ENCODE measurements at regions of chr7 and their contacts with region 1.

Region 1: DNA sequence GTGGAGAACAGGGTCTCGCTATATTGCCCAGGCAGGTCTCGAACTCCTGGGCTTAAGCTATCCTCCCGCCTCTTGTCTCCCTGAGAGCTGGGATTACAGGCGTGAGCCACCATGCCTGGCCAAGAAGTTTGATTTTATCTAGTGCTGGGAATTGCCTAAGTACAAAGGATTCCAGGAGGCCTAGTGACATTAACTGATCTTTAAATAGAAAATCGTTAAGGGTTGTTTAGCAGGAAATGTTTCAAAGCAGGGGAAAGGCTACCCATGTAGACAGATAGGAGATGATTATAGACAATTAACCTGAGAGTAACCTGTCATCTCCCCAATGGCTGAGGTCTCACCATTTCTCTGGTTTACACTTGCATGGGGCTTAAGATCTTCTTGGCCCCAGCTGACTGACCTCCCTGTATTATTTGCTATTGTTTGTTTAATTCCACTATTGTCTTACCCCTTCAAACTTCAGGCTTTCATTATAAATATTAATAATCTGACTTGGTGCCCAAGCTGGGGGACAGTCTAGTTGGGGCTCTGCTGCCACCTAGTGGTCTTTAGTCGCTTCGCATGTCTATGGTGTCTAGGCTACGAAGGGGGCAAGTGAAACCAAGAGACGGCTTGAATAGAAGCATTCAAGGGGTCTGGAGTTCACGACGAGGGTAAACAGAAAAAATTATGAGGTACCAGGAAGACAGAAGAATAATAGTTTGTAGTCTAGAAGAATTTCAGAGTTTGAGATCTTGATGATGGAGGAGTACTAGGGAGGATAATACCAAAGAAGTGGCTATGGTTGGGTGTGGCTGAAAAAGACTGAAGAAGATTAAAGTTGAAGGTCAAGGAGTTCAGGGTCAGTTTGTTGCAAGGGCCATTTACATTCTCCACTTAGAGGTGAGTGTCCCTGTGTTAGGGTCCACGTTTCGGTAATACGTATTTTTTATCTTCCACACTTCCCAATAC is 40.4 kb upstream of the BPGM start:
- DNase-seq: peak; percentile 20 to 64 (median 50)
- ATAC-seq: peak; percentile 92
- H3K4me3 ChIP-seq: no peak overlapping the region
- H3K4me3 Mint-ChIP-seq: peak overlapping the region in 9 of 10 donors; percentile 6 to 85 (median 61)
- H3K27ac ChIP-seq: no peak overlapping the region
- H3K27ac Mint-ChIP-seq: peak overlapping the region in 1 of 9 donors; percentile 80
- H3K4me1 ChIP-seq: no peaks in the 10 kb centered on the region
- H3K4me1 Mint-ChIP-seq: peaks cover 4 to 6% (median 5%) of the 10 kb centered on the region in 7 donors
- H3K27me3 ChIP-seq: no peaks in the 10 kb centered on the region
- H3K27me3 Mint-ChIP-seq: peaks cover 4 to 48% (median 22%) of the 10 kb centered on the region in 5 donors

Region 2: DNA sequence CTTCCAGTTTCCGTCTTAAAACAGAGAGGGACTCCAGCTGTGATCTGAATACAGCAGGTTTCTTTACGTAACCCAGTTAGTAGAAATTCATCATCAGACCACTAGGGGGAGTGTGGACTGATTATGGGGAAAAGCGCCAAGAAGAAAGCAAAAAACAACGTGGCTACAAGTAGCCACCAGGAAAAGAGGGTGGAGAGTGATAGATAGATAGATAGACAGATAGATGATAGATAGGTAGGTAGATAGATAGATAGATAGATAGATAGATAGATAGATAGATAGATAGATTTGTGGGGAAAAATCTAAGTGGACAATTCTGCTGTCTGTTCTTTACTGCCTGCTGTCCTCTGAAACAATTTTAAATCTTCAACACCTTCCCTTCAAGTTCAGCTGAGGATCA is 91.6 kb before region 1 on chr7:
- CTCF ChIA-PET with region 1: interaction called, 15 read pairs
- POLR2A ChIA-PET with region 1: no interaction called
- intact Hi-C with region 1: loop called (anchors 1 kb)
- DNase-seq: peak in 7 of 9 donors; percentile 32 to 67 (median 57)
- ATAC-seq: peak; percentile 81
- H3K4me3 ChIP-seq: no peak overlapping the region
- H3K4me3 Mint-ChIP-seq: peak overlapping the region in 1 of 10 donors; percentile 49
- H3K27ac ChIP-seq: no peak overlapping the region
- H3K27ac Mint-ChIP-seq: no peak overlapping the region
- H3K4me1 ChIP-seq: no peaks in the 10 kb centered on the region
- H3K4me1 Mint-ChIP-seq: peaks cover 4 to 6% (median 5%) of the 10 kb centered on the region in 7 donors
- H3K27me3 ChIP-seq: no peaks in the 10 kb centered on the region
- H3K27me3 Mint-ChIP-seq: peaks cover 6 to 21% (median 14%) of the 10 kb centered on the region in 5 donors

Region 3: DNA sequence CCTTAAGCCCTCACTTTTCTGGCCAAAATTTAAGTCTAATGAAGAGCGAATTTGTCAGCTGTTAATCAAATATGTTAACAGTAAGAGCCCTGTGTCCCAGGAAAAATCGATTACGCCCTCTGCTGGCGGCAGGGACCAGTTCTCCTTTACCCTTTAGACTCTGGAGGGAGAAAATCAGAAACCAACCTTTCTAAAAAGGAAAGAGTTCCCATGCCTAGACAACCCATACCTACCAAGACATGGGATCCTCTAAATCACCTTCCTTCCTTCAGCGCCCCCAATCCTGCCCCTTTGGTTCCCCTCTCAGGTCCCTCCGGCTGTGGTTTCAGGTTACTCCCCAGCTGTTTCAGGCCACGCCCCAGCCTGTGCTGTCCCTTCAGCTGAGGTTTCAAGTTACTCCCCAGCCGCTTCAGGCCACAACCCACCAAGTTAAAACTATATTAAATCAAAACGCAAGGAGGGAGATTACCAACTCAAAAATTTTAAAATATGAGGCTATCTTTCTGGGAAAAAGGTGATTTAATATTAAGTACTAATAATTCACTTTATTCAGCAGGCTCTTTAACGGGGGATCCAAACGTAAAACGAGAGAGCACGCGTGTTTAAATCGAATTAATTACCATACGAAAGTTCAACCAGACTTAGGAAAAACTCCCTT is 58.7 kb before region 1 on chr7:
- CTCF ChIA-PET with region 1: no interaction called
- POLR2A ChIA-PET with region 1: no interaction called
- intact Hi-C with region 1: loop called (anchors 1 to 2 kb)
- DNase-seq: peak; percentile 11 to 70 (median 54)
- ATAC-seq: peak; percentile 80
- H3K4me3 ChIP-seq: no peak overlapping the region
- H3K4me3 Mint-ChIP-seq: peak overlapping the region in 2 of 10 donors; percentile 19 to 38
- H3K27ac ChIP-seq: no peak overlapping the region
- H3K27ac Mint-ChIP-seq: peak overlapping the region in 1 of 9 donors; percentile 70
- H3K4me1 ChIP-seq: no peaks in the 10 kb centered on the region
- H3K4me1 Mint-ChIP-seq: peaks cover 0 to 7% (median 0%) of the 10 kb centered on the region in 7 donors
- H3K27me3 ChIP-seq: peaks cover 0 to 4% of the 10 kb centered on the region in 2 donors
- H3K27me3 Mint-ChIP-seq: peaks cover 4 to 27% (median 12%) of the 10 kb centered on the region in 5 donors

Region 4: DNA sequence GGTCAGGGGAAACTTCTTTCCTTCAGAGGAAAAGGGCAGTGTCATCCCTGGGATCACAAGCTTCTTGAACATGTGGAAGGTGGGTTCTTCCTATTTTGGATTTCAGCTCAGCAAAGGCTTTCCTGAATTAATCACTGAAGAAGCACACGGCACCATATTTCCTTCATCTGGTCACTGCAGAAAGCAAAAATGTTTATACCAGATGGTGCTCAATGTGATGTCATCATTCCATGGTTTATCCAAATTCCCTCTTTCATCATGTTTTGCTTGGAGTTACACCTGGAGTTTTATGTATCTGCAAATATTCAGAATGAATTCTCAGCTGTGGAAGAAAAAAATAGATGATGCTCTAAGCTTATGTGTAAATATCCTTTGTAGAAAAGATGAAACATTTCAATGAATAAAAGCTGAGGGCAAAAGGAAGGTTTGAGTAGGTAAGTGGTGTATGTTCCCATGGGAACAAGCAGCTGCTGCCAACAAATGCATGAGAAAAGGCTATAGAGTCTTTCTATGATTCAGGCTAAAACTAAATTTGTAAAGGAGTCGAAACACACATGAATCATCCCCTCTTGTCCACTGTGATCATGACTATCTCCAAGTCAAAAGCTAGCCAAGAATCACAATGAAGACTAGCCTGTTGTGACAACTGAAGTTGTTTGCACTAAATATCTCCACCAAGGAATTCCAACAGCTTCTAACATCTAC is 13.5 kb after region 1 on chr7:
- CTCF ChIA-PET with region 1: interaction called, 14 read pairs
- POLR2A ChIA-PET with region 1: interaction called, 6 read pairs
- intact Hi-C with region 1: no loop called
- DNase-seq: no peak
- ATAC-seq: no peak
- H3K4me3 ChIP-seq: no peak overlapping the region
- H3K4me3 Mint-ChIP-seq: no peak overlapping the region
- H3K27ac ChIP-seq: no peak overlapping the region
- H3K27ac Mint-ChIP-seq: no peak overlapping the region
- H3K4me1 ChIP-seq: no peaks in the 10 kb centered on the region
- H3K4me1 Mint-ChIP-seq: no peaks in the 10 kb centered on the region
- H3K27me3 ChIP-seq: peaks cover 0 to 4% of the 10 kb centered on the region in 2 donors
- H3K27me3 Mint-ChIP-seq: peaks cover 12 to 40% (median 38%) of the 10 kb centered on the region in 5 donors

Region 5: DNA sequence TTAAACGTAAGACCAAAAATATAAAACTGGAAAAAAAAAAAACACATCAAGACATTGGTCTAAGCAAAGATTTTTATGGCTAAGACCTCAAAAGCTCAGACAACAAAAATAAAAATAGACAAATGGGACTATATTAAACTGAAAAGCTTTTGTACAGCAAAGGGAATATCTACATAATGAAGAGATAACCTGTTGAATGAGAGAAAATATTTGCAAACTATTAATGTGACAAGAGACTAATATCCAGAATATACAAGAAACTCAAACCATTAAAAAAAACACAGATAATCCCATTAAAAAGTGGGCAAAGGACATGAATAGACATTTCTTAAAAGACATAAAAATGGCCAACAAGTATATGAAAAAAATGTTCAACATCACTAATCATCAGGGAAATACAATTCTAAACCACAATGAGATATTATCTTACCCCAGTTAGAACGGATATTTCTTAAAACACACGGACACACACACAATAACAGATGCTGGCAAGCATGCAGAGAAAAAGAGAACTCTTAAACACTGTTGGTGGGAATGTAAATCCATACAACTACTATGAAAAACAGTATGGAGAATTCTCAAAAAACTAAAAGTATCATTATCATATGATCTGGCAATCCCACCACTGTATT is 874.8 kb after region 1 on chr7:
- CTCF ChIA-PET with region 1: no interaction called
- POLR2A ChIA-PET with region 1: no interaction called
- intact Hi-C with region 1: no loop called
- DNase-seq: no peak
- ATAC-seq: no peak
- H3K4me3 ChIP-seq: no peak overlapping the region
- H3K4me3 Mint-ChIP-seq: peak overlapping the region in 1 of 10 donors; percentile 41
- H3K27ac ChIP-seq: no peak overlapping the region
- H3K27ac Mint-ChIP-seq: peak overlapping the region in 3 of 9 donors; percentile 6 to 44 (median 34)
- H3K4me1 ChIP-seq: peaks cover 0 to 15% of the 10 kb centered on the region in 2 donors
- H3K4me1 Mint-ChIP-seq: peaks cover 9 to 60% (median 45%) of the 10 kb centered on the region in 7 donors
- H3K27me3 ChIP-seq: no peaks in the 10 kb centered on the region
- H3K27me3 Mint-ChIP-seq: no peaks in the 10 kb centered on the region